CD8-positive, alpha-beta T cell (primary cell): ENCODE measurements at regions of chr1 and their contacts with region 1.

Region 1: GRCh38 chr1:186272486-186272885 is 102.6 kb downstream of the TPR start:
- DNase-seq: peak in 2 of 9 experiments; percentile 11 to 27
- ATAC-seq: peak; percentile 38
- H3K4me3 ChIP-seq: no peak overlapping the region
- H3K4me3 Mint-ChIP-seq: no peak overlapping the region
- H3K27ac ChIP-seq: no peak overlapping the region
- H3K27ac Mint-ChIP-seq: no peak overlapping the region
- H3K4me1 ChIP-seq: no peaks in the 10 kb centered on the region
- H3K4me1 Mint-ChIP-seq: peaks cover 2% of the 10 kb centered on the region
- H3K27me3 ChIP-seq: no peaks in the 10 kb centered on the region
- H3K27me3 Mint-ChIP-seq: peaks cover 6% of the 10 kb centered on the region
- CTCF ChIP-seq: peak; percentile 45

Region 2: GRCh38 chr1:186304982-186305949 is 32.8 kb after region 1 on chr1:
- CTCF ChIA-PET with region 1: no interaction called
- POLR2A ChIA-PET with region 1: no interaction called
- intact Hi-C with region 1: loop called in 1 of 2 experiments (anchors 5 kb)
- DNase-seq: peak in 2 of 9 experiments; percentile 45 to 60
- ATAC-seq: peak; percentile 37
- H3K4me3 ChIP-seq: no peak overlapping the region
- H3K4me3 Mint-ChIP-seq: no peak overlapping the region
- H3K27ac ChIP-seq: peak overlapping the region in 1 of 2 experiments; percentile 10
- H3K27ac Mint-ChIP-seq: peak overlapping the region; percentile 93
- H3K4me1 ChIP-seq: peaks cover 50% of the 10 kb centered on the region
- H3K4me1 Mint-ChIP-seq: peaks cover 49% of the 10 kb centered on the region
- H3K27me3 ChIP-seq: no peaks in the 10 kb centered on the region
- H3K27me3 Mint-ChIP-seq: no peaks in the 10 kb centered on the region
- CTCF ChIP-seq: peak; percentile 74